Activated naive CD4-positive, alpha-beta T cell treated with anti-CD3 and anti-CD28 coated beads, Interleukin-2, amount 10 ng/mL, durations not matched to agents 7 days and 5 days (primary cell): ENCODE measurements at regions of chr2 and their contacts with region 1.

Region 1: GRCh38 chr2:181457121-181457740 is at the start of gene ITGA4:
- DNase-seq: peak; percentile 92
- H3K4me3 Mint-ChIP-seq: peak within 1 kb of the TSS; percentile 92
- H3K27ac Mint-ChIP-seq: peak within 1 kb of the TSS; percentile 94
- H3K4me1 Mint-ChIP-seq: peaks cover 43% of the 10 kb centered on the region
- H3K27me3 Mint-ChIP-seq: no peaks in the 10 kb centered on the region

Region 2: DNA sequence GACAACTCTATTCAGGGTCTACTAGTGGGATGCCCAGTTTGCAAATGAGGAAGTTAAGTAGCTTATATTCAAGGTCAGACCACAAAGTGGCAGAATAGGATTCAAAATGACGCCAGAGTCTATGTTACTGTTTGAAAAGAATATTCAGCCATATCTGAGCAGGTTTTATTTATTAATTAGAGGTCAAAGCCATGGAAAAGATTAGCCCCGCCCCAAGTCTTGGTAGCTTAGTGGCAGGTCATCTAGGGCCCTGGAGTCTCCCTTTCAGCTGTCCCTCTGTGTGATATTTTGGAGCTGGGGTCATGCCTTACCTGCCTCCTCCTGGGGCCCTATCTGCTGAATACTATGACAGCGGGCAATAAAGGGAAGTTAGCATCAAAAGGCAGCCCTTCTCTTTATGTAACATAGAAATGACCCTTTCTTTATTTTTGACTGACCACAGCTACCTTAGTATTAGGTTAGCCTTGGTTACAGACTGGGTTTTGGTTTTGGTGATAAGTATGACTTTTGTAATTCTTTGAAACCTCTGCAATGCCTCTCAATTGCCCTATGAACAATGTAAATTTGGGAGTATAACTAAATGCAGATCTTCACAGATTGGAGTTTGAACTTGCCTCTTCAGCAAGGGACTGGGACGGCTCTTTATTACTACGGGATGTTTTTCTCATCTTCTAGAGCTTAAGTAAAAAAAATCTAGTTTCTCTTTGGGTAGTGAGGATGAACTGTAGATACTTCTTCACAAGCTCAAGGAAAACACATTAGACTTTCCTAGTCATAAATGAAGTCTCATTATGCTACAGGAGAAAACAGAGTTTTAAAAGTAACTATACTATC is 153.0 kb before region 1 on chr2:
- CTCF ChIA-PET with region 1: interaction called, 15 read pairs
- DNase-seq: no peak
- H3K4me3 Mint-ChIP-seq: peak overlapping the region; percentile 42
- H3K27ac Mint-ChIP-seq: peak overlapping the region; percentile 98
- H3K4me1 Mint-ChIP-seq: peaks cover 91% of the 10 kb centered on the region
- H3K27me3 Mint-ChIP-seq: no peaks in the 10 kb centered on the region

Region 3: DNA sequence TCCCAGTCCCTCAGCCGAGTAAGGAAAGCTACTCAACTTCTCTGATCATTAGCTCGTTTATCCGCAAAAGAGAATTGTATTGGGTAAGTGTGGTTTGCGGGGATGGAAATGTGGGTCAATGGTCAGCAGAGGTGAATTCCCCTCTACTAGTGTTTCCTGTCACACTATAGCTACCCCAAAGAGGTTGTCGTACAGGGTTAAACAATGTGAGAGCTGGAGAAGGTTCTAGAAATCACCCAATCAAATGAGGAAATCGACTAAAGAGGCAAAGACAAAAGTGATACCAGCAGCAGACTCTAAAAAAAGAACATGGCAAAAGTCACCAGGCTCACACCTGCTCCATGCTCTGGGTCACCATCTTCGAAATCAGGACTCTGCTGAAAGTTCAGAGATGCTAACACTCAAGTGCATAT is 144.7 kb before region 1 on chr2:
- CTCF ChIA-PET with region 1: interaction called, 15 read pairs
- DNase-seq: peak; percentile 42
- H3K4me3 Mint-ChIP-seq: peak overlapping the region; percentile 68
- H3K27ac Mint-ChIP-seq: peak overlapping the region; percentile 97
- H3K4me1 Mint-ChIP-seq: peaks cover 64% of the 10 kb centered on the region
- H3K27me3 Mint-ChIP-seq: no peaks in the 10 kb centered on the region

Region 4: GRCh38 chr2:181348107-181348837 is 109.0 kb before region 1 on chr2:
- CTCF ChIA-PET with region 1: no interaction called
- DNase-seq: no peak
- H3K4me3 Mint-ChIP-seq: no peak overlapping the region
- H3K27ac Mint-ChIP-seq: no peak overlapping the region
- H3K4me1 Mint-ChIP-seq: peaks cover 6% of the 10 kb centered on the region
- H3K27me3 Mint-ChIP-seq: no peaks in the 10 kb centered on the region

Region 5: GRCh38 chr2:181683518-181684453 is 226.6 kb after region 1 on chr2:
- CTCF ChIA-PET with region 1: no interaction called
- DNase-seq: peak; percentile 20
- H3K4me3 Mint-ChIP-seq: no peak overlapping the region
- H3K27ac Mint-ChIP-seq: peak overlapping the region; percentile 39
- H3K4me1 Mint-ChIP-seq: peaks cover 33% of the 10 kb centered on the region
- H3K27me3 Mint-ChIP-seq: peaks cover 79% of the 10 kb centered on the region